Caco-2 (cell line): ENCODE measurements at regions of chr2 and their contacts with region 1.

Region 1: GRCh38 chr2:106358081-106358480 is 110.1 kb downstream of the RGPD3 start:
- DNase-seq: no peak
- H3K4me3 ChIP-seq: no peak overlapping the region
- H3K4me3 Mint-ChIP-seq: no peak overlapping the region
- H3K27ac Mint-ChIP-seq: no peak overlapping the region
- H3K4me1 ChIP-seq: no peaks in the 10 kb centered on the region
- H3K4me1 Mint-ChIP-seq: no peaks in the 10 kb centered on the region
- H3K27me3 ChIP-seq: no peaks in the 10 kb centered on the region
- H3K27me3 Mint-ChIP-seq: peaks cover 6% of the 10 kb centered on the region
- CTCF ChIP-seq: no peak

Region 2: DNA sequence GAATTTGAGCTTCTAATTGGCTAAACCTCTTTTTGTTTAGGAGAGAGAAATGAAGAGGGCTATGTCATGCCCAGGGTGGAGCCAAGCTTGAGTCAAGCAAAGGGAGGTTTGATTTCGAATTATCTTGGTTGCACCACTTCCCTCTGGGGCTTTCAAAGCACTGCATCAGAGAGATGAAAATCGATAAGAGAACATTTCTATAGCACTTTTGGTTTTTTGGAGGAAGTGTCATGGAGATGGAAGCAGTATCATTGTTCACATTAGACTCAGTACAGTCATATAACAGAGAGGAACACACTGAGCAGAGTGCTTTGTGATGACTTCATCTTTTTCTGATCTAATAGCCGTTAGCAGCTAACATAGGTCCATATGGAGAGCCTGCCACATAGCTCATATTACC is 43.6 kb before region 1 on chr2:
- CTCF ChIA-PET with region 1: no interaction called
- POLR2A ChIA-PET with region 1: no interaction called
- intact Hi-C with region 1: no loop called
- DNase-seq: no peak
- H3K4me3 ChIP-seq: no peak overlapping the region
- H3K4me3 Mint-ChIP-seq: no peak overlapping the region
- H3K27ac Mint-ChIP-seq: no peak overlapping the region
- H3K4me1 ChIP-seq: no peaks in the 10 kb centered on the region
- H3K4me1 Mint-ChIP-seq: no peaks in the 10 kb centered on the region
- H3K27me3 ChIP-seq: no peaks in the 10 kb centered on the region
- H3K27me3 Mint-ChIP-seq: no peaks in the 10 kb centered on the region
- CTCF ChIP-seq: no peak

Region 3: GRCh38 chr2:106833256-106833655 is 475.2 kb after region 1 on chr2:
- CTCF ChIA-PET with region 1: no interaction called
- POLR2A ChIA-PET with region 1: no interaction called
- intact Hi-C with region 1: no loop called
- DNase-seq: no peak
- H3K4me3 ChIP-seq: no peak overlapping the region
- H3K4me3 Mint-ChIP-seq: no peak overlapping the region
- H3K27ac Mint-ChIP-seq: no peak overlapping the region
- H3K4me1 ChIP-seq: no peaks in the 10 kb centered on the region
- H3K4me1 Mint-ChIP-seq: no peaks in the 10 kb centered on the region
- H3K27me3 ChIP-seq: no peaks in the 10 kb centered on the region
- H3K27me3 Mint-ChIP-seq: peaks cover 11% of the 10 kb centered on the region
- CTCF ChIP-seq: no peak

Region 4: DNA sequence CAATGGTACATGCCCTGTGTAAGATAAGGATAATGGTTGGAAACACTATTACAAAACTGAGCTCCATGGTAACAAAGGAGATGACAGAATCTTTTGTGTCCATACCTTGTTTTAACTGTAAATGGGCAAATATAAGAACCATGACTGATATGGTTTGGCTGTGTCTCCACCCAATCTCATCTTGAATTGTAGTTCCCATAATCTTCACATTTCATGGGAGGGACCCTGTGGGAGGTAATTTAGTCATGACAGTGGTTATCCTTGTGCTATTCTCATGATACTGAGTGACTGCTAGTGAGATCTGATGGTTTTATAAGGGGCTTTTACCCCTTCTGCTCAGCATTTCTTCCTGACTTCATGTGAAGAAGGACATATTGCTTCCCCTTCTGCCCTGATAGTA is 1257.0 kb after region 1 on chr2:
- CTCF ChIA-PET with region 1: no interaction called
- POLR2A ChIA-PET with region 1: no interaction called
- intact Hi-C with region 1: loop called (anchors 10 kb)
- DNase-seq: no peak
- H3K4me3 ChIP-seq: no peak overlapping the region
- H3K4me3 Mint-ChIP-seq: no peak overlapping the region
- H3K27ac Mint-ChIP-seq: no peak overlapping the region
- H3K4me1 ChIP-seq: 0 out of 2 replicates have a peak, but pooled peaks cover 7% of the 10 kb centered on the region
- H3K4me1 Mint-ChIP-seq: no peaks in the 10 kb centered on the region
- H3K27me3 ChIP-seq: no peaks in the 10 kb centered on the region
- H3K27me3 Mint-ChIP-seq: no peaks in the 10 kb centered on the region
- CTCF ChIP-seq: no peak